ENCODE measurements at regions of chr6 and their contacts with region 1.

Region 1: GRCh38 chr6:149431905-149432775 is 32.1 kb downstream of the SUMO4 start:
- DNase-seq: peak; percentile 96
- ATAC-seq: peak; percentile 97
- H3K4me3 Mint-ChIP-seq: peak overlapping the region; percentile 28
- H3K27ac Mint-ChIP-seq: peak overlapping the region; percentile 77
- H3K4me1 Mint-ChIP-seq: peaks cover 6% of the 10 kb centered on the region
- H3K27me3 Mint-ChIP-seq: no peaks in the 10 kb centered on the region
- CTCF ChIP-seq: peak; percentile 95

Region 2: GRCh38 chr6:149028767-149029405 is 403.3 kb before region 1 on chr6:
- CTCF ChIA-PET with region 1: interaction called, 180 read pairs
- POLR2A ChIA-PET with region 1: interaction called, 4 read pairs
- intact Hi-C with region 1: loop called (anchors 1 kb)
- DNase-seq: peak; percentile 74
- ATAC-seq: no peak
- H3K4me3 Mint-ChIP-seq: peak overlapping the region; percentile 10
- H3K27ac Mint-ChIP-seq: no peak overlapping the region
- H3K4me1 Mint-ChIP-seq: peaks cover 46% of the 10 kb centered on the region
- H3K27me3 Mint-ChIP-seq: no peaks in the 10 kb centered on the region
- CTCF ChIP-seq: peak; percentile 78

Region 3: GRCh38 chr6:149060300-149060997 is 371.7 kb before region 1 on chr6:
- CTCF ChIA-PET with region 1: interaction called, 17 read pairs
- POLR2A ChIA-PET with region 1: no interaction called
- intact Hi-C with region 1: no loop called
- DNase-seq: peak; percentile 77
- ATAC-seq: peak; percentile 93
- H3K4me3 Mint-ChIP-seq: peak overlapping the region; percentile 60
- H3K27ac Mint-ChIP-seq: peak overlapping the region; percentile 84
- H3K4me1 Mint-ChIP-seq: peaks cover 43% of the 10 kb centered on the region
- H3K27me3 Mint-ChIP-seq: no peaks in the 10 kb centered on the region
- CTCF ChIP-seq: no peak

Region 4: DNA sequence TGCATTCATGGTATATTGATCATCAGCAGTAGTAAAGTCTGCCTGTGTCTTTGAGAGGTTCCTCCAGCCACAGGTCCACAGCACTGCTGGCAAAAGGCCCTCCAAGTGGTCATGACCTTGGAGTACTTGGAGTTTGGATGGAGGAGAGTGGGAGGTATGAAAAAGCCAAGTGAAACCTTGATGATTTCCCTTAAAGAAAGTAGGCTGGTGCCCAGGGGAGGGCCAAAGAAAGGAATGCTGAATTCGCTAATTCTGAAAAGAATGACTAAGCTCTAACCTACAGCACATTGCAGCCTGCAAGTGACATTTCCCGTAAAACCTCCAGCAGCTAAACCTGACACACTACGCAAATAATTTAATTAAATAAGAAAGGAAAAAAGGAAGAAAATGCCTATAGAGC is 338.0 kb before region 1 on chr6:
- CTCF ChIA-PET with region 1: interaction called, 20 read pairs
- POLR2A ChIA-PET with region 1: interaction called, 3 read pairs
- intact Hi-C with region 1: no loop called
- DNase-seq: peak; percentile 23
- ATAC-seq: no peak
- H3K4me3 Mint-ChIP-seq: peak overlapping the region; percentile 62
- H3K27ac Mint-ChIP-seq: peak overlapping the region; percentile 96
- H3K4me1 Mint-ChIP-seq: peaks cover 50% of the 10 kb centered on the region
- H3K27me3 Mint-ChIP-seq: no peaks in the 10 kb centered on the region
- CTCF ChIP-seq: no peak

Region 5: DNA sequence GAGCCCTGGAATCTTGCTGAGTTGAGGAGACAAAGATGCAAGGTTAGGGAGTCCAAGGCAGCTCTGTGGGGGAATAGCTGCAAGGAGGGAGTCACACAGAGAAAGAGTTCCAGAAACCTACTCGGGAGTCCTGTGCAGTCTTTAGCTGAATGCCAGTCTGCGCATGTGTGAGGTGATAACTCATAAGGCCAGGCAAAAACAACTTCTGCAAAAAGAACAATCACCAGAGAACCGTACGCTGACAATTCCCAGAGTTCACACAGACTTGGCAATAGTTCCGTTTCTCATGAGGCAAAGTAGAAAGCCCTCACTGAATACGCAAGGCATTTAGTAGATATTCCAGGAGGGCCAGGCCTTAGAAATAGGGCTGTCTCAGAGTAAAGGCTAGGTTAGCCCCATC is 249.9 kb before region 1 on chr6:
- CTCF ChIA-PET with region 1: no interaction called
- POLR2A ChIA-PET with region 1: no interaction called
- intact Hi-C with region 1: no loop called
- DNase-seq: no peak
- ATAC-seq: no peak
- H3K4me3 Mint-ChIP-seq: no peak overlapping the region
- H3K27ac Mint-ChIP-seq: no peak overlapping the region
- H3K4me1 Mint-ChIP-seq: no peaks in the 10 kb centered on the region
- H3K27me3 Mint-ChIP-seq: no peaks in the 10 kb centered on the region
- CTCF ChIP-seq: no peak

Region 6: GRCh38 chr6:149380523-149380922 is 51.6 kb before region 1 on chr6:
- CTCF ChIA-PET with region 1: interaction called, 14 read pairs
- POLR2A ChIA-PET with region 1: no interaction called
- intact Hi-C with region 1: no loop called
- DNase-seq: no peak
- ATAC-seq: peak; percentile 93
- H3K4me3 Mint-ChIP-seq: no peak overlapping the region
- H3K27ac Mint-ChIP-seq: peak overlapping the region; percentile 61
- H3K4me1 Mint-ChIP-seq: peaks cover 66% of the 10 kb centered on the region
- H3K27me3 Mint-ChIP-seq: no peaks in the 10 kb centered on the region
- CTCF ChIP-seq: no peak

Region 7: DNA sequence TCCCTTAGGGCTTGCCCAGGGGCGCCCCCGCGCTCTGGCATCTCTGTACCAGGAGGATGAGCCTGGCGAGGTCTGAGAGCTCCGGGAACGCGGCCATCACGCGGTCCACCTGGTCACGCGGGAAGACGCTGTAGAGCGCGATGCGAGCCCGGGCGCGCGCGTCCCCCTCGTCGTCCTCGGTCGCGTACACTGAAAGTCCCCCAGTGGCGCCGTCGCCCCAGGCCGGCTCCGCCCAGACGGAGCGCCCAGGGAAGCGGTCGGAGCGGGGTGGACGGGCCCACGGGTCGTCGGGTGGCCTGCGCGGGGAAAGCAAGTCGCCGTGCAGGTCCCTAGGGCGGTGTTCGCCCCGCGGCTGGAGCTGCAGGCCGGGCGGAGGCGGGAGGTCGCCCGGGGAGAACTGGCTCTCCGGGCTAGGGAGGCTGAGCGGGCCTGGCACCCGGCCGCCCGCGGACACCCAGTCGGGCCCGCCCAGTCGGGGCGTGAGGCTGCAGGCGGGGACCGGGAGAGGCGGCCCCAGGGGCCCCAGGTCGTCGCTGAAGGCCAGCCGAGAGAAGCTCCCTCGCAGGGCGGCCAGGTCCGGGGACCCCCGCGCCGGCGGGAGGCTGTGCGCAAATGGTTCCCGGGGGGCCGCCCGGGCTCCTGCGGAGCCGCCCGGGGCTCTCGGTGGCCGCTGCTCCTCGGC is 18.7 kb after region 1 on chr6:
- CTCF ChIA-PET with region 1: interaction called, 25 read pairs
- POLR2A ChIA-PET with region 1: interaction called, 4 read pairs
- intact Hi-C with region 1: no loop called
- DNase-seq: peak; percentile 16
- ATAC-seq: peak; percentile 28
- H3K4me3 Mint-ChIP-seq: peak overlapping the region; percentile 36
- H3K27ac Mint-ChIP-seq: no peak overlapping the region
- H3K4me1 Mint-ChIP-seq: no peaks in the 10 kb centered on the region
- H3K27me3 Mint-ChIP-seq: no peaks in the 10 kb centered on the region
- CTCF ChIP-seq: no peak

Measured in activated CD8-positive, alpha-beta T cell treated with anti-CD3 and anti-CD28 coated beads for 36 hours (primary cell).